Mammary epithelial cell (primary cell): ENCODE measurements at regions of chr7 and their contacts with region 1.

Region 1: DNA sequence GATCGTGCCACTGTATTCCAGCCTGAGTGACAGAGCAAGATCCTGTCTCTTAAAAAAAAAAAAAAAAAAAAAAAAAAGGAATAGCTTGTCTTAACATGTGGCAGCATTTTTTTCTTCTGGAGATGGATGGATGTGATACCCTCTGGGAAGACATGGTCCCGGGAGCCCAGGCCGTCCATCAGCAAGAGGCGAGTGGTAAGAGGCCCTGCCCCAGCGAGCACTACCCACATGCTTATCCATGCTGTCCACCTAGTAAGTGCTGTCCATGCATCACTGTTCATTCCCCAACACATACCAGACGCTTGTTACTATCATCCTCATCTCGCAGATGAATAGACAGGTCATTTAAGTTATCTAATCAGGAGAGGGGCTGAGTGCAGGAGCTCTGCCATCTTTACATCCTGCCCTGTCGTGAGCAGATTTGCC is 12.9 kb downstream of the ATP6V1F start:
- DNase-seq: no peak
- H3K4me3 ChIP-seq: no peak overlapping the region
- H3K27ac ChIP-seq: no peak overlapping the region
- H3K4me1 ChIP-seq: peaks cover 20% of the 10 kb centered on the region
- H3K27me3 ChIP-seq: no peaks in the 10 kb centered on the region
- CTCF ChIP-seq: no peak

Region 2: DNA sequence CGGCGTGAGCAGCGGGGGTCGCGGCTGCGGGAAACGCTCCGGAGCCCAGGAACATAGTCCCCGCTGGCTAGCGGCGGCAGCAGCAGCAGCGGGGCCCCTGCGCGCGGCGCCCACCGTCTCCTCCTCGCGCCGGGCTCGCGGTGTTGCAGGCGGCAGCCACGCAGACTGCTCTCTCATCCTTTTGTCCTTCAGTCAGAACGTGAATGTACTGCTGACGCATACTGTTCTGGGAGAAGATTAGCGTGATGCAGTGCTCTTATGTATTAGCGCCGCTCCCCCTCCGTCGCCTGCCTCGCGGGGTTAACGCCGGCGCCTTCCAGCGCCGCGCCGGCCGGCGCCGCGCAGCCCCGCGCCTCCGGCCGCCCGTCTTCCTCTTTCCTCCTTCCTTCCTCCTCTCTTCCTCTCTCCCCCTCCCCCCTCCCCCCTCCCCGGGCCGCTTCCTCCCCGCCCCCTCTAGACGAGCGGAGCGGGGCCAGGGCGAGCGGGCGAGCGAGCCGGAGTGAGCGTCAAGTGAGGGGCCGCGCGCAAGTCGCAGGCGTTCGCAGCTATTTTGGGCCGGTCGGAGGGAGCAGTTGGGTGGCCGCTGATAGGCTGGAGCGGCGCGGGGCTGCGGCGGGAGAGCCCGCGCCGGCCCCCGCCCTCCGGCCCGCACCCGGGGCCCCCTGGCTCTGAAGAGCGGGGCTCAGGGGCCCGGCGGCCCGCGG is 843.5 kb before region 1 on chr7:
- CTCF ChIA-PET with region 1: no interaction called
- dilution Hi-C with region 1: no loop called
- in situ Hi-C with region 1: no loop called
- intact Hi-C with region 1: no loop called
- DNase-seq: peak; percentile 83
- H3K4me3 ChIP-seq: peak overlapping the region in 2 of 3 experiments; percentile 41 to 43
- H3K27ac ChIP-seq: no peak overlapping the region
- H3K4me1 ChIP-seq: peaks cover 12% of the 10 kb centered on the region
- H3K27me3 ChIP-seq: no peaks in the 10 kb centered on the region
- CTCF ChIP-seq: peak; percentile 20 to 30

Region 3: GRCh38 chr7:128862571-128863432 is 12.7 kb before region 1 on chr7 and contains the start of gene ATP6V1F:
- CTCF ChIA-PET with region 1: interaction called, 12 read pairs
- dilution Hi-C with region 1: no loop called
- in situ Hi-C with region 1: no loop called
- intact Hi-C with region 1: loop called (anchors 2 kb)
- DNase-seq: peak; percentile 97
- H3K4me3 ChIP-seq: peak within 1 kb of the TSS; percentile 58 to 99 (median 89)
- H3K27ac ChIP-seq: peak within 1 kb of the TSS; percentile 75
- H3K4me1 ChIP-seq: peaks cover 12% of the 10 kb centered on the region
- H3K27me3 ChIP-seq: no peaks in the 10 kb centered on the region
- CTCF ChIP-seq: no peak
- total RNA-seq, gene ATP6V1F: 83.7 to 171 TPM

Region 4: GRCh38 chr7:129066290-129067131 is 191.0 kb after region 1 on chr7:
- CTCF ChIA-PET with region 1: no interaction called
- dilution Hi-C with region 1: no loop called
- in situ Hi-C with region 1: no loop called
- intact Hi-C with region 1: no loop called
- DNase-seq: peak; percentile 68
- H3K4me3 ChIP-seq: no peak overlapping the region
- H3K27ac ChIP-seq: no peak overlapping the region
- H3K4me1 ChIP-seq: peaks cover 8% of the 10 kb centered on the region
- H3K27me3 ChIP-seq: peaks cover 4% of the 10 kb centered on the region
- CTCF ChIP-seq: no peak